ENCODE measurements at regions of chr6 and their contacts with region 1.

Region 1: DNA sequence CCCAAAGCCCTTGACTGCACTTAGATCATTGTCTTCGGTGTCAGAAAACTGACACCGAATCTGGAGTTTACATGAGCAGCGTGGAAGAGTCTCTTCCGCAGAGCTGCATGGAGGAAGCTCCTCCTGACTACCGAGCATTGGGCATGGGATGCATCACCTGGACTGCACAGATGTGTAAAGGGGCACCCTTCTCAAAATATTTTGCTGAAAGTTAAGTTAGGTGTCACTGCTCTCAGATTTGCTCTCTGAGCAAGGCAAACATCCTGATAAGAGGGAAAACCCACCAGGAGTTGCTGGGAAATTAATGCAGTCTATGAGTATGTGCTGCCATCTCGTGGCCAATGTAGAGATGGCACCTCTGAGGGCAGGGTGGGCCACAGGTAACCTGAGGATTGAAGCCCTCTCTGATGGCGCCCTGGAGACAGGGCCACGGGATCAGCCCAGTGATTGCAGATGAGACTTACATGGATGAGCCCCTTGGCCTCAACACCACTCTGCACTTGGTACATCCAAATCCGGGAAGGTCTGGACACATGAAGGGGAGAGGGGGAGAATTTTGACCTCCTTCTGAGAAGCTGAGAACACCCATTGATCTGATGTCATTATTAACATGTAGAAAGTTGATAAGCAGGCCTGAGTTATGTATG is 129.9 kb downstream of the LPA start:
- DNase-seq: no peak
- H3K4me3 ChIP-seq: peak overlapping the region in 3 of 4 donors; percentile 14 to 38 (median 21)
- H3K27ac ChIP-seq: no peak overlapping the region
- H3K4me1 ChIP-seq: peaks cover 4 to 7% (median 7%) of the 10 kb centered on the region in 4 donors
- H3K27me3 ChIP-seq: no peaks in the 10 kb centered on the region
- CTCF ChIP-seq: peak; percentile 88 to 97 (median 94)
- EP300 ChIP-seq: no peak
- POLR2A ChIP-seq: no peak

Region 2: GRCh38 chr6:159862103-159862502 is 672.1 kb before region 1 on chr6:
- intact Hi-C with region 1: loop called (anchors 10 kb)
- DNase-seq: no peak
- H3K4me3 ChIP-seq: no peak overlapping the region
- H3K27ac ChIP-seq: no peak overlapping the region
- H3K4me1 ChIP-seq: no peaks in the 10 kb centered on the region
- H3K27me3 ChIP-seq: peaks cover 0 to 5% (median 0%) of the 10 kb centered on the region in 4 donors
- CTCF ChIP-seq: no peak
- EP300 ChIP-seq: no peak
- POLR2A ChIP-seq: no peak

Region 3: GRCh38 chr6:160439751-160440150 is 94.4 kb before region 1 on chr6:
- intact Hi-C with region 1: no loop called
- DNase-seq: no peak
- H3K4me3 ChIP-seq: no peak overlapping the region
- H3K27ac ChIP-seq: no peak overlapping the region
- H3K4me1 ChIP-seq: no peaks in the 10 kb centered on the region
- H3K27me3 ChIP-seq: no peaks in the 10 kb centered on the region
- CTCF ChIP-seq: no peak
- EP300 ChIP-seq: no peak
- POLR2A ChIP-seq: no peak

Region 4: GRCh38 chr6:160520043-160520904 is 13.9 kb before region 1 on chr6:
- intact Hi-C with region 1: loop called (anchors 1 kb)
- DNase-seq: peak; percentile 92
- H3K4me3 ChIP-seq: peak overlapping the region; percentile 62 to 83 (median 78)
- H3K27ac ChIP-seq: peak overlapping the region; percentile 75 to 89 (median 82)
- H3K4me1 ChIP-seq: peaks cover 0 to 14% (median 11%) of the 10 kb centered on the region in 4 donors
- H3K27me3 ChIP-seq: no peaks in the 10 kb centered on the region
- CTCF ChIP-seq: no peak
- EP300 ChIP-seq: no peak
- POLR2A ChIP-seq: no peak

Region 5: GRCh38 chr6:160766989-160767660 is 233.0 kb after region 1 on chr6:
- intact Hi-C with region 1: loop called (anchors 10 kb)
- DNase-seq: peak; percentile 92
- H3K4me3 ChIP-seq: peak overlapping the region; percentile 53 to 59 (median 54)
- H3K27ac ChIP-seq: no peak overlapping the region
- H3K4me1 ChIP-seq: peaks cover 7 to 17% (median 12%) of the 10 kb centered on the region in 4 donors
- H3K27me3 ChIP-seq: peaks cover 0 to 9% (median 0%) of the 10 kb centered on the region in 4 donors
- CTCF ChIP-seq: peak; percentile 52 to 74 (median 69)
- EP300 ChIP-seq: no peak
- POLR2A ChIP-seq: no peak

Measured in esophagus muscularis mucosa (tissue), 4 donors.